ENCODE measurements at regions of chr4 and their contacts with region 1.

Region 1: DNA sequence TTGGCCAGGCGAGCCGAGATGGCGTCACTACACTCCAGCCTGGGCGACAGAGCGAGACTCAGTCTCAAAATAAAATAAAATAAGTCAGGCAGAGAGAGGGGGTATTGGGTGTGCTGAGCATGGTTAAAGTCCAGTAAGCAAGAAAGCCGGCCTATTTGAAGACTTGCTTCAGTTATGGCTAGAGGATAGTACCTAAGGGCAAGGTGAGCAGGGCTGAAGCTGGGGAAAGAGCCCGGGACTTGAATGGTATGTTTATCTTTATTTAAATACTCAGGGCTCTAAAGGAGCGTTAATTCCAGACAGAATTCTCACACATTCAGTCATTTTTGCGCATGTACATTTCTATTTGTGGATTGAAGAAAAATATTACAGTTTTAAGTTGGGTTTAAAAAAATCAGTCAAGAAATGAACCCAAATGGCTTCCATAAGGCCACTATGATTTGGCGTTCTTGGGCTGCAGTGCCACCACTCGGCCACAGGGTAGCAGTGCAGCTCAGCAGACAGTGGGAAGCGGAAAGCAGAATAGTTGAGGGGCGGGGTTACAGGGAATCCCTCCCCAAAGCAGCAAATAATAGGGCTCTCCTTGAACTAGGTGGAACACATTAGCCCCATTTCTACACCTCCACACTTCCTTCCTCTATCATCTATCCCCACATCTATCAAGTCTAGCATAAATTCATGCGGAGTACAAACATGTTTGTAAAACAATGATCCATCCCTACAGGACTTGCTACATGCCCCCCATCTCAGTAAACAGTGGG is 37.2 kb upstream of the SH3D19 start:
- DNase-seq: peak; percentile 90
- ATAC-seq: peak; percentile 100
- H3K4me3 Mint-ChIP-seq: no peak overlapping the region
- H3K27ac Mint-ChIP-seq: no peak overlapping the region
- H3K4me1 Mint-ChIP-seq: peaks cover 2% of the 10 kb centered on the region
- H3K27me3 Mint-ChIP-seq: peaks cover 2% of the 10 kb centered on the region

Region 2: GRCh38 chr4:151117371-151117962 is 245.1 kb before region 1 on chr4:
- CTCF ChIA-PET with region 1: interaction called, 3 read pairs
- POLR2A ChIA-PET with region 1: no interaction called
- intact Hi-C with region 1: loop called (anchors 1 to 5 kb)
- DNase-seq: peak; percentile 74
- ATAC-seq: peak; percentile 72
- H3K4me3 Mint-ChIP-seq: no peak overlapping the region
- H3K27ac Mint-ChIP-seq: no peak overlapping the region
- H3K4me1 Mint-ChIP-seq: peaks cover 8% of the 10 kb centered on the region
- H3K27me3 Mint-ChIP-seq: no peaks in the 10 kb centered on the region

Region 3: GRCh38 chr4:151276787-151277562 is 85.6 kb before region 1 on chr4 and contains the start of gene PRSS48:
- CTCF ChIA-PET with region 1: interaction called, 8 read pairs
- POLR2A ChIA-PET with region 1: no interaction called
- intact Hi-C with region 1: loop called (anchors 1 to 5 kb)
- DNase-seq: peak; percentile 79
- ATAC-seq: peak; percentile 55
- H3K4me3 Mint-ChIP-seq: no peak within 1 kb of the TSS
- H3K27ac Mint-ChIP-seq: no peak within 1 kb of the TSS
- H3K4me1 Mint-ChIP-seq: no peaks in the 10 kb centered on the region
- H3K27me3 Mint-ChIP-seq: peaks cover 3% of the 10 kb centered on the region
- total RNA-seq, gene PRSS48: not detected

Region 4: GRCh38 chr4:151418856-151419255 is 56.3 kb after region 1 on chr4:
- CTCF ChIA-PET with region 1: no interaction called
- POLR2A ChIA-PET with region 1: no interaction called
- intact Hi-C with region 1: no loop called
- DNase-seq: no peak
- ATAC-seq: no peak
- H3K4me3 Mint-ChIP-seq: no peak overlapping the region
- H3K27ac Mint-ChIP-seq: no peak overlapping the region
- H3K4me1 Mint-ChIP-seq: no peaks in the 10 kb centered on the region
- H3K27me3 Mint-ChIP-seq: peaks cover 4% of the 10 kb centered on the region

Region 5: GRCh38 chr4:151604238-151604637 is 241.7 kb after region 1 on chr4:
- CTCF ChIA-PET with region 1: interaction called, 3 read pairs
- POLR2A ChIA-PET with region 1: no interaction called
- intact Hi-C with region 1: loop called (anchors 1 to 2 kb)
- DNase-seq: no peak
- ATAC-seq: no peak
- H3K4me3 Mint-ChIP-seq: no peak overlapping the region
- H3K27ac Mint-ChIP-seq: no peak overlapping the region
- H3K4me1 Mint-ChIP-seq: no peaks in the 10 kb centered on the region
- H3K27me3 Mint-ChIP-seq: no peaks in the 10 kb centered on the region

Region 6: DNA sequence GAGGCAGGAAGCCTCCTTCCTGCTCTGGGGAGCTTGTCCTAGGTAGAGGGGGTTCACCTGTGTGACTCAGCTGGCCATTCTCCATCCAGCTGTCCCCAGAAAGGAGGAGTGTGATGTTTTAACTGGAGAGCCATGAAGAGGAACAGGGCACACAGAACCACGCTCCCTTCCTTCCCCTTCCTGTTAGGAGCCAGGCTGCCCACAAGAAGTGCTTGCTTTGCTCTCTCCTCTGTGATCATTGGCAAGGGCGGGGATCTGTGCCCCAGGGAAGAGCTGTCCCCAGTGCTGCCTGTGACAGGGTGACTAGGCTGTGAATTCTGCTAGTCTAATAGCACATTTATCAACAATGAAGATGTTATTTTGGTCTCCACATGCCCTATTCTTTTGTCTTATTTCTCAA is 567.8 kb after region 1 on chr4:
- CTCF ChIA-PET with region 1: no interaction called
- POLR2A ChIA-PET with region 1: no interaction called
- intact Hi-C with region 1: loop called in 1 of 2 experiments (anchors 10 kb)
- DNase-seq: no peak
- ATAC-seq: no peak
- H3K4me3 Mint-ChIP-seq: no peak overlapping the region
- H3K27ac Mint-ChIP-seq: no peak overlapping the region
- H3K4me1 Mint-ChIP-seq: no peaks in the 10 kb centered on the region
- H3K27me3 Mint-ChIP-seq: no peaks in the 10 kb centered on the region

Region 7: DNA sequence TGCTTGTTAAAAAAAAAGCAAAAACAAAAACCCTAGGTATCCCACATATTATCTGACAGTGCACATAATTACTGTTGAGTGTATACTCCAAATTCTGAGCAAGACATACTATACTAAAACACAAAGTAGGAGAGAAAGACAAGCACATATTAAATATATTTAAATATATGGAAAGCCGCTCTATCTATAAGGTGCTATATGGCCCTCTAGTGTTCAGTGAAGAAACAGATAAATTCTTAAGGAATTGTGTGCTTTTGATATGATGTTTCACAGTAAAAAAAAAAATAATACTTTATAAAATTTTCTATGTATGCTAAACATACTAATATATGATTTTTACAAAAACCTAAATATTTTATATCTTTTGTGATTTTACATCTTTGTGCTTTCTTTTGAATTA is 1035.5 kb after region 1 on chr4:
- CTCF ChIA-PET with region 1: no interaction called
- POLR2A ChIA-PET with region 1: no interaction called
- intact Hi-C with region 1: loop called in 1 of 2 experiments (anchors 5 kb)
- DNase-seq: no peak
- ATAC-seq: no peak
- H3K4me3 Mint-ChIP-seq: no peak overlapping the region
- H3K27ac Mint-ChIP-seq: no peak overlapping the region
- H3K4me1 Mint-ChIP-seq: peaks cover 32% of the 10 kb centered on the region
- H3K27me3 Mint-ChIP-seq: no peaks in the 10 kb centered on the region